ENCODE measurements at regions of chr2 and their contacts with region 1.

Region 1: GRCh38 chr2:11863513-11864328 is 117.3 kb downstream of the LPIN1 start:
- DNase-seq: peak; percentile 86
- H3K4me3 Mint-ChIP-seq: peak overlapping the region; percentile 30
- H3K27ac Mint-ChIP-seq: no peak overlapping the region
- H3K4me1 Mint-ChIP-seq: peaks cover 14% of the 10 kb centered on the region
- H3K27me3 Mint-ChIP-seq: no peaks in the 10 kb centered on the region
- CTCF ChIP-seq: peak; percentile 96

Region 2: DNA sequence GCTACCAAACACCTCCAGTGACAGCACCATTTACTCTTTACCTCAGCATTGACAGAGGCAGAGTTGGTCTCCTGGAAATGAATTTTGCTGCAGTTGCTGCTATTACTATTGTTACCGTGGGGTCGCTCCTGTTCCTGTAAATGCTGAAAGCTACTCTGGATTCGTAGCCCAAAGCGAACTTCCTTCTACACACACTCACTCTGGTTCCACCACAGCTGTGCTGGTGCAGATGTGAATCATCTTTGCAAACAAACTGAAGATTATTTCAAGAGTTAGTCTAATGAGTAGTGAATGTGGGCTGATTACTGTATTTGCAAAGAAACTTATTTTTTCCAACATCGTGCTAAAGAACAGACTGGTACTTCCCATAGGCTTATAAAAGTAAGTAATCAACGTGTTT is 186.7 kb after region 1 on chr2:
- CTCF ChIA-PET with region 1: interaction called, 13 read pairs
- intact Hi-C with region 1: no loop called
- DNase-seq: no peak
- H3K4me3 Mint-ChIP-seq: no peak overlapping the region
- H3K27ac Mint-ChIP-seq: no peak overlapping the region
- H3K4me1 Mint-ChIP-seq: no peaks in the 10 kb centered on the region
- H3K27me3 Mint-ChIP-seq: peaks cover 43% of the 10 kb centered on the region
- CTCF ChIP-seq: no peak

Region 3: GRCh38 chr2:12176623-12177454 is 313.1 kb after region 1 on chr2:
- CTCF ChIA-PET with region 1: no interaction called
- intact Hi-C with region 1: loop called (anchors 10 kb)
- DNase-seq: peak; percentile 48
- H3K4me3 Mint-ChIP-seq: no peak overlapping the region
- H3K27ac Mint-ChIP-seq: no peak overlapping the region
- H3K4me1 Mint-ChIP-seq: no peaks in the 10 kb centered on the region
- H3K27me3 Mint-ChIP-seq: peaks cover 47% of the 10 kb centered on the region
- CTCF ChIP-seq: no peak

Region 4: DNA sequence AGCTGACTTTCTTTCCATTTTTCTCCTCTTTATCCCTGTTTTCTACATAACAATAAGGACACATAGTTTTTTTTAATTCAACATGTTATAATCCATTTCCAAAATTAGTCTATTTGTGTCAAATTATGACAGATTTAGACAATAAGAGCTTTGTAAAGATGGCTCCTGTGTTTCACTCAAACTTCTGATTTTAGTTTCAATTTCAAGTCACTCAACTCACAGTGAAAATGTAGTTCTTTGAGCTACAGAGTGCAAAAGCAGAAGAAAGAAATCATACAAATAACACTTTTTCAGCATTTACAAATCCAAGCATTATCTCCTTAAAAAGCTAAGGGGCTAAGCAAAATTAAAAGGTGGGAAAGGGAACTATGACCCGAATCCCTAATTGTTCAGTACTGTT is 512.3 kb after region 1 on chr2:
- CTCF ChIA-PET with region 1: no interaction called
- intact Hi-C with region 1: loop called (anchors 5 kb)
- DNase-seq: no peak
- H3K4me3 Mint-ChIP-seq: no peak overlapping the region
- H3K27ac Mint-ChIP-seq: no peak overlapping the region
- H3K4me1 Mint-ChIP-seq: no peaks in the 10 kb centered on the region
- H3K27me3 Mint-ChIP-seq: no peaks in the 10 kb centered on the region
- CTCF ChIP-seq: no peak

Region 5: GRCh38 chr2:13390676-13391075 is 1527.0 kb after region 1 on chr2:
- CTCF ChIA-PET with region 1: no interaction called
- intact Hi-C with region 1: no loop called
- DNase-seq: no peak
- H3K4me3 Mint-ChIP-seq: no peak overlapping the region
- H3K27ac Mint-ChIP-seq: no peak overlapping the region
- H3K4me1 Mint-ChIP-seq: no peaks in the 10 kb centered on the region
- H3K27me3 Mint-ChIP-seq: no peaks in the 10 kb centered on the region
- CTCF ChIP-seq: no peak

Measured in Calu3 (cell line).